ENCODE measurements at regions of chr12 and their contacts with region 1.

Region 1: GRCh38 chr12:72453066-72453465 is 180.9 kb downstream of the TRHDE start:
- DNase-seq: no peak
- H3K4me3 Mint-ChIP-seq: no peak overlapping the region
- H3K27ac Mint-ChIP-seq: no peak overlapping the region
- H3K4me1 Mint-ChIP-seq: no peaks in the 10 kb centered on the region
- H3K27me3 Mint-ChIP-seq: no peaks in the 10 kb centered on the region
- CTCF ChIP-seq: no peak

Region 2: DNA sequence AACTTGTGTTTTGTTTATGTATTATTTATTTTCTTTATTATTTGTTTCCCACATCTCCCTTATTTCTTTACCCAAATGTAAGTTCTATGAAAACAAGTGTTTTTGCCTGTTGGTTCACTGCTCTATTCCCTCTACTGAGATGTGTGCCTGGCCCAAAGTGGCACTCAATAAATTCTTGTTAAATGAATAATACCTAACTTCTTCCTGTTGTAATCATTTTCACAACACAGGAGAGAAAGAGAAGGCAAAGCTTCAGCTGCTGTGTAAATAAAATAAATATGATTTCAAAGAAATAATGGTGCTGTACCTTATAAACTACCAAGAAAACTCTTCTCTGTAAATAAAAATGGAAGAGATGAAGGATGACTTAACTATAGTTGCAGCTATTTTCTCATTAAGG is 64.7 kb before region 1 on chr12:
- CTCF ChIA-PET with region 1: interaction called, 10 read pairs
- intact Hi-C with region 1: no loop called
- DNase-seq: no peak
- H3K4me3 Mint-ChIP-seq: no peak overlapping the region
- H3K27ac Mint-ChIP-seq: peak overlapping the region; percentile 5
- H3K4me1 Mint-ChIP-seq: peaks cover 20% of the 10 kb centered on the region
- H3K27me3 Mint-ChIP-seq: no peaks in the 10 kb centered on the region
- CTCF ChIP-seq: no peak

Region 3: DNA sequence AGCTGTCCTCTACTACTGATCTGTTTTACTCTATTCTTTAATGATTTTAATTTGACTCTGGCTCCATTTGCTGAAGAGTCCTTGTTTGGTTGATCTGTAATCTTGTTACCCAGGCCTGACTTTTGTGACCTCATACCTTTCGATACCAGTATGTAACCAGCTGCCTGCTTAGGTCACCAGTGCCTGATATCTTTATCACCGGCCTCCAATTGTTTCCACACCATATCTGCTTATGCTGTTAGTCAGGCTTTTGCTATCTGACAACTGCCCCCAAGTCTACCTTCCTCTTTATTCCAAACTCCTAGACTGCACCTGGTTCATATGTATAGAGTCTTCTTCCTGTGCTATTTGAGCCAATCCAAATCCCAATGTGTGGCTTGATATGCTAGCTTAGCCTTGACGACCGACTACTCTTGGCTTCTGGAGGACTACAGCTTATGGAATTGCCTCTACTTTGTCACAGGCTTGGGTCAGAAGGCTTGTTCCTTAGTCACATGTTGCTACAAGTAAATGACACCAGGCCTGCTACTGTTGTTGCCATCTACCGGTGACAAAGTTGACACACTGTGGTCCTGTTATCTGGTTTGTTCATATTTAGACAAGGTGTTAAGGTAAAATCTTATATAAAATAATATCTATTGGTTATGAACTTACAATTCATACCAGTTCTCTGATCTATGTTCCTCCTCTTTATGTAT is 13.0 kb after region 1 on chr12:
- CTCF ChIA-PET with region 1: no interaction called
- intact Hi-C with region 1: no loop called
- DNase-seq: no peak
- H3K4me3 Mint-ChIP-seq: no peak overlapping the region
- H3K27ac Mint-ChIP-seq: no peak overlapping the region
- H3K4me1 Mint-ChIP-seq: no peaks in the 10 kb centered on the region
- H3K27me3 Mint-ChIP-seq: no peaks in the 10 kb centered on the region
- CTCF ChIP-seq: no peak